ENCODE measurements at regions of chr15 and their contacts with region 1.

Region 1: GRCh38 chr15:49145651-49146609 is 9.5 kb downstream of the COPS2 start:
- DNase-seq: peak; percentile 90
- H3K4me3 ChIP-seq: peak overlapping the region in 1 of 3 experiments; percentile 17
- H3K27ac ChIP-seq: peak overlapping the region; percentile 31
- H3K4me1 ChIP-seq: peaks cover 10% of the 10 kb centered on the region
- H3K27me3 ChIP-seq: no peaks in the 10 kb centered on the region
- CTCF ChIP-seq: peak; percentile 53 to 59
- POLR2A ChIP-seq: no peak

Region 2: GRCh38 chr15:48868536-48868935 is 277.4 kb before region 1 on chr15:
- CTCF ChIA-PET with region 1: interaction called, 181 read pairs
- POLR2A ChIA-PET with region 1: no interaction called
- dilution Hi-C with region 1: no loop called
- intact Hi-C with region 1: no loop called
- DNase-seq: peak; percentile 35
- H3K4me3 ChIP-seq: no peak overlapping the region
- H3K27ac ChIP-seq: no peak overlapping the region
- H3K4me1 ChIP-seq: peaks cover 12% of the 10 kb centered on the region
- H3K27me3 ChIP-seq: peaks cover 4 to 11% of the 10 kb centered on the region in 2 experiments
- CTCF ChIP-seq: no peak
- POLR2A ChIP-seq: no peak

Region 3: DNA sequence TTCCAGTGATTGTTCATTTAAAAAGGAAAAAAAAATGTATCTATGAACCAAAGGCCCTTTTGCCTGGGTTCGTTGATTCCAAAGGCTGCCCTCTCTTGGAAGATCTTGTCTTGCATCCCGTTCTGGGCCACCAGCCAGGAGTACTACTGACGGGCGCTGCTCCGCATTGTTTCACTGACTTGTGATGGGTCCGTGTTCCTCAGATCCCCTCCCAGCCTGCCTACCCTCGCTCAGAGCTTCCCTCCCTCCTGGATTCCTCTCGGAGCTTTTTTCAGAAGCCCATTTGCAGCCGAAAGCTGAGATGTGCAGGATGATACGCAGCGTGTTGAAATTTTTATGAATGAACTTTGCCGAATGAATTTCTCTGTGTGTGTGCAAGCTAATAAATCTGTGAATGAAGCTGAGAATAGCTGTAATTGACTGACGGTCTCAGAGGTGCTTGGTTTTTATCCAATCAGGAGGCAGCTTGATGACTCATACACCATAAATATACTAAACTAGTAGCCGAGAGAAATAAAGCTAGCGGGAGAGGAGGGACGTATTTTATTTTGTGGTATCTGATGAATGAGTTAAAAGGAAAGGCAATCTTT is 182.3 kb before region 1 on chr15 and contains the start of gene SHC4:
- CTCF ChIA-PET with region 1: interaction called, 20 read pairs
- POLR2A ChIA-PET with region 1: no interaction called
- dilution Hi-C with region 1: no loop called
- intact Hi-C with region 1: loop called (anchors 1 kb)
- DNase-seq: peak; percentile 89
- H3K4me3 ChIP-seq: peak within 1 kb of the TSS; percentile 17 to 76 (median 40)
- H3K27ac ChIP-seq: no peak within 1 kb of the TSS
- H3K4me1 ChIP-seq: peaks cover 8% of the 10 kb centered on the region
- H3K27me3 ChIP-seq: peaks cover 13 to 21% of the 10 kb centered on the region in 2 experiments
- CTCF ChIP-seq: no peak
- POLR2A ChIP-seq: no peak
- total RNA-seq, gene SHC4: 0.20 TPM in 1 of 2 replicates, not detected in the other

Region 4: GRCh38 chr15:48984811-48985352 is 161.0 kb before region 1 on chr15:
- CTCF ChIA-PET with region 1: interaction called, 14 read pairs
- POLR2A ChIA-PET with region 1: no interaction called
- dilution Hi-C with region 1: no loop called
- intact Hi-C with region 1: no loop called
- DNase-seq: no peak
- H3K4me3 ChIP-seq: no peak overlapping the region
- H3K27ac ChIP-seq: no peak overlapping the region
- H3K4me1 ChIP-seq: no peaks in the 10 kb centered on the region
- H3K27me3 ChIP-seq: peaks cover 5 to 9% of the 10 kb centered on the region in 2 experiments
- CTCF ChIP-seq: no peak
- POLR2A ChIP-seq: no peak

Region 5: GRCh38 chr15:49046220-49047102 is 99.5 kb before region 1 on chr15 and contains the start of gene SECISBP2L:
- CTCF ChIA-PET with region 1: interaction called, 36 read pairs
- POLR2A ChIA-PET with region 1: no interaction called
- dilution Hi-C with region 1: no loop called
- intact Hi-C with region 1: loop called (anchors 1 kb)
- DNase-seq: peak; percentile 97
- H3K4me3 ChIP-seq: peak within 1 kb of the TSS; percentile 75 to 98 (median 80)
- H3K27ac ChIP-seq: peak within 1 kb of the TSS; percentile 74
- H3K4me1 ChIP-seq: peaks cover 18% of the 10 kb centered on the region
- H3K27me3 ChIP-seq: peaks cover 0 to 1% of the 10 kb centered on the region in 2 experiments
- CTCF ChIP-seq: peak; percentile 23 to 49
- POLR2A ChIP-seq: peak; percentile 51
- total RNA-seq, gene SECISBP2L: 44.7 and 52.3 TPM in 2 replicates

Region 6: DNA sequence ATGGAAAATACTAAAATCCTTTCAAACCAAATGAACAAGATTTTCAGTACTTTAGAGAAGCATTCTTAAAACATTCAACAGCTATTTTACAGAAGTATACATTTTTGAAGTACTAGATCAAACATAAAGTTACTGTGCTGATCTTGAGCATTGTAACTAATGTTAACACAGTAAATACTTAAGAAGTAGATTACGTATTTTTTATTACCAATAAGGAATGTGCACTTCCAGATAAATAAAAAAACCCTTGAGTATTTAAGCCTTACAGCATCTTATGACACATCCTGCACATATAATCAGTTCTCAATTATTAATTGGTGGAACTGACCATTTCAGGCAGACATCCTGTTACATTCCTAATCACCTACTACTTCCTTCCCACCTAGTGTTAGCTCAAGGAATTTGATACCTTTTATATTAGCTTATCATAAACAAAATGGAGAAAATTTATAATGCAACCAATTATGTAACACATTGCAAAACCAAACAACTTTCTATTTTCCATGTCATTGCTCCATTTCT is 23.3 kb before region 1 on chr15:
- CTCF ChIA-PET with region 1: interaction called, 13 read pairs
- POLR2A ChIA-PET with region 1: no interaction called
- dilution Hi-C with region 1: no loop called
- intact Hi-C with region 1: no loop called
- DNase-seq: peak; percentile 37
- H3K4me3 ChIP-seq: no peak overlapping the region
- H3K27ac ChIP-seq: peak overlapping the region; percentile 29
- H3K4me1 ChIP-seq: peaks cover 15% of the 10 kb centered on the region
- H3K27me3 ChIP-seq: no peaks in the 10 kb centered on the region
- CTCF ChIP-seq: no peak
- POLR2A ChIP-seq: no peak

Region 7: DNA sequence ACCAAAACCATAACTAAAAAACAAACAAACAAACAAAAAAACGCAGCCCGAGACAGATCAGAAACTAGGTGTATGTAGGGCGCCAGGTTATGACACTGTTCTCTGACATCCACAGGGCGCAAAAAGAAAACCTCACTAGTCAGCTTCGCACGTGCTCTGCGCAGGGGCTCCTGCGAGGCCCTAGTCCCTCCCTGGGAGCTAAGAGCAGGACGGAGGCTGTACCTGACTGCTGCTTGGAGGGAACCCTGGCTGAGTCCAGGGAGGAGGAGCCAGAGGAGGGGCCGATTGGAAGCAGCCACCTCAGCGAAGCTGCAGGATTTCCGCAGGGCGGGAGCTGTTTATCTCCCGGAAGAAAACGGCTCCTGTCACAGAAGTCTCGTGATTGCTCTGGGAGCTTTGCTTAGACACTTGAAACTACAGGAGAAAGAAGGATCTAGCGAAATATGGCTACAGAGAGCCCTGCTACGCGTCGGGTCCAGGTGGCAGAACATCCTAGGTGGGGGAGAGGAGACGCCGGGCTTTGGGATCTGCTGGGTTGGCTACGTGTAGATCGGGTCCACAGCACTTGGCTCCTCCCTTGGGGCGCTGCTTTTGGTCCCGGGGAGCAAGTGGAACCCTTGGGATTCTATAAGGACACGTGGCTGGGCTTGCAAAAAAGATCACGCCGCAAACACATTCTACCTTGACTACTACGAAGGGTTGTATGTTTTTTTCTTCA is 24.1 kb after region 1 on chr15 and contains the start of gene GALK2:
- CTCF ChIA-PET with region 1: interaction called, 10 read pairs
- POLR2A ChIA-PET with region 1: no interaction called
- dilution Hi-C with region 1: no loop called
- intact Hi-C with region 1: no loop called
- DNase-seq: peak; percentile 85
- H3K4me3 ChIP-seq: peak within 1 kb of the TSS; percentile 66 to 94 (median 88)
- H3K27ac ChIP-seq: peak within 1 kb of the TSS; percentile 78
- H3K4me1 ChIP-seq: peaks cover 10% of the 10 kb centered on the region
- H3K27me3 ChIP-seq: no peaks in the 10 kb centered on the region
- CTCF ChIP-seq: no peak
- POLR2A ChIP-seq: peak; percentile 87
- total RNA-seq, gene GALK2: 31.3 and 34.6 TPM in 2 replicates

Region 8: DNA sequence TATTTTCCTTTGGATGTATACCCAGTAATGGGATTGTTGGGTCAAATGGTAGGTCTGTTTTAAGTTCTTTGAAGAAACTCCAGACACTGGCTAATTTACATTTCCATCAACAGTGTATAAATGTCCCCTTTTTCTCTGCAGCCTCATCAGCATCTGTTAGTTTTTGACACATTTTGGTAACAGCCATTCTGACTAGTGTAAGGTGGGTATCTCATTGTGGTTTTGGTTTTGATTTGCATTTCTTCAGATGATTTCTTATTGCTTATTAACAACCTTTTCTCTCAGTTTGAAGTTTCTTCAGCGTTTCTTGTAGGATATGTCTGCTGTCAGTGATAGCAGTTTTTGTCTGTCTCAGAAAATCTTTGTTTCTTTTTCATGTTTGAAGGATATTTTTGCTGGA is 39.5 kb after region 1 on chr15:
- CTCF ChIA-PET with region 1: no interaction called
- POLR2A ChIA-PET with region 1: no interaction called
- dilution Hi-C with region 1: no loop called
- intact Hi-C with region 1: no loop called
- DNase-seq: no peak
- H3K4me3 ChIP-seq: no peak overlapping the region
- H3K27ac ChIP-seq: no peak overlapping the region
- H3K4me1 ChIP-seq: no peaks in the 10 kb centered on the region
- H3K27me3 ChIP-seq: no peaks in the 10 kb centered on the region
- CTCF ChIP-seq: no peak
- POLR2A ChIP-seq: no peak

Region 9: GRCh38 chr15:49823987-49824538 is 678.1 kb after region 1 on chr15:
- CTCF ChIA-PET with region 1: no interaction called
- POLR2A ChIA-PET with region 1: no interaction called
- dilution Hi-C with region 1: no loop called
- intact Hi-C with region 1: no loop called
- DNase-seq: no peak
- H3K4me3 ChIP-seq: no peak overlapping the region
- H3K27ac ChIP-seq: no peak overlapping the region
- H3K4me1 ChIP-seq: no peaks in the 10 kb centered on the region
- H3K27me3 ChIP-seq: no peaks in the 10 kb centered on the region
- CTCF ChIP-seq: no peak
- POLR2A ChIP-seq: no peak